SK-N-SH (cell line): ENCODE measurements at regions of chr9 and their contacts with region 1.

Region 1: GRCh38 chr9:116149844-116150243 is 3.7 kb upstream of the PAPPA start:
- DNase-seq: peak; percentile 53
- H3K4me3 ChIP-seq: no peak overlapping the region; a peak in 1 of 4 replicates
- H3K27ac ChIP-seq: peak overlapping the region in 1 of 2 experiments; percentile 99; a peak in 2 of 4 replicates
- H3K4me1 ChIP-seq: peaks cover 4 to 45% of the 10 kb centered on the region in 2 experiments; a peak in 3 of 4 replicates
- H3K27me3 ChIP-seq: no peaks in the 10 kb centered on the region
- CTCF ChIP-seq: peak; percentile 72
- EP300 ChIP-seq: no peak
- RAD21 ChIP-seq: peak; percentile 55

Region 2: GRCh38 chr9:116163293-116164055 is 13.6 kb after region 1 on chr9:
- CTCF ChIA-PET with region 1: interaction called, 11 read pairs
- POLR2A ChIA-PET with region 1: no interaction called
- DNase-seq: no peak
- H3K4me3 ChIP-seq: no peak overlapping the region
- H3K27ac ChIP-seq: peak overlapping the region in 1 of 2 experiments; percentile 16; a peak in 1 of 4 replicates
- H3K4me1 ChIP-seq: peaks cover 0 to 38% of the 10 kb centered on the region in 2 experiments; a peak in 1 of 4 replicates
- H3K27me3 ChIP-seq: no peaks in the 10 kb centered on the region
- CTCF ChIP-seq: peak; percentile 55
- EP300 ChIP-seq: no peak
- RAD21 ChIP-seq: peak; percentile 32; the same call in 1 of the 2 replicates

Region 3: GRCh38 chr9:116572095-116572748 is 422.4 kb after region 1 on chr9:
- CTCF ChIA-PET with region 1: interaction called, 51 read pairs
- POLR2A ChIA-PET with region 1: no interaction called
- DNase-seq: peak; percentile 84
- H3K4me3 ChIP-seq: no peak overlapping the region; a peak in 1 of 4 replicates
- H3K27ac ChIP-seq: peak overlapping the region in 1 of 2 experiments; percentile 16; a peak in 1 of 4 replicates
- H3K4me1 ChIP-seq: peaks cover 4 to 49% of the 10 kb centered on the region in 2 experiments; a peak in 2 of 4 replicates
- H3K27me3 ChIP-seq: no peaks in the 10 kb centered on the region
- CTCF ChIP-seq: peak; percentile 92
- EP300 ChIP-seq: 0 out of 4 replicates have a peak, but pooled peaks of 1 of the 2 experiments have one; percentile 10
- RAD21 ChIP-seq: peak; percentile 98

Region 4: DNA sequence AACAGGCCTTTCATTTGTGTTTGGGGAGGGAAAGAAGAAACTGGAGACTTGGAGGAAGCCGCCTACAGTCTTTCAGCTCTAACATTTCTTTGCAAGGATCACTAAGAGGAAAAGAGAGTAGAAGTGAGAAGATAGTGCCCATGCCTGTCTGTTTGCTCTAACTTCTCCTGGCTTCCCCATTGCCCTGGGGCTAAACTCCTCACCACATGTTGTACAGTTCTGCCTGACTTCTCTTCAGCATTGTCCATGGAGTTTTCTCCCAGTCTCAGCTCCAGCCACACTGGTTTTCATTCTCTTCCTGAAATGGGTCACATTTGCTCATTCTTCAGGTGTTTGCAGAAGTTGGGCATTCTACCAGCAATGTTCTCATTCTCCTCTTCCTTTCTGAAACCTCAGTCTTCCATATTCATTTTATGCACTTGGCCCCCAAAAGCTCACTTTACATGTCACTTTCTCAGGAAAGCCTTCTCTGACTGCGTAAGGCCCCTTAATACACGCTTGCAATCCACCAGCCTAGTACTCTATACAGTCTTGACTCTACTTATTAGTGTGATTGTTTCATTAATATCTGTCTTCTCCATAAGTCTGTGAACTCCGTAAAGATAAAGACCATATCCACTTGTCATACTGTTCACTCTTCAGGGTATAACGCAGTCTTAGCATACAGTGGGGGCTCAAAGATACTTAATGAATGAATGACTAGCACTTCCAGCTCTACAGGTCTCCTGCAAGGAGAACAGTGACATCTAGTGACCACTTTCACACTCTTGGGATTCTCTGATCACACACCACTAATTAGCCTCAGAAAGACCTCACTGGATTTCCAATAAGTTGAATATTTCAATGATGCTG is 497.0 kb after region 1 on chr9:
- CTCF ChIA-PET with region 1: interaction called, 25 read pairs
- POLR2A ChIA-PET with region 1: no interaction called
- DNase-seq: peak; percentile 25
- H3K4me3 ChIP-seq: no peak overlapping the region
- H3K27ac ChIP-seq: no peak overlapping the region
- H3K4me1 ChIP-seq: peaks cover 0 to 9% of the 10 kb centered on the region in 2 experiments; a peak in 2 of 4 replicates
- H3K27me3 ChIP-seq: no peaks in the 10 kb centered on the region
- CTCF ChIP-seq: peak; percentile 73
- EP300 ChIP-seq: no peak
- RAD21 ChIP-seq: peak; percentile 88

Region 5: GRCh38 chr9:116661037-116661954 is 511.5 kb after region 1 on chr9:
- CTCF ChIA-PET with region 1: interaction called, 11 read pairs
- POLR2A ChIA-PET with region 1: no interaction called
- DNase-seq: peak; percentile 53
- H3K4me3 ChIP-seq: no peak overlapping the region; a peak in 1 of 4 replicates
- H3K27ac ChIP-seq: no peak overlapping the region
- H3K4me1 ChIP-seq: no peaks in the 10 kb centered on the region; a peak in 1 of 4 replicates
- H3K27me3 ChIP-seq: no peaks in the 10 kb centered on the region
- CTCF ChIP-seq: peak; percentile 80
- EP300 ChIP-seq: 0 out of 4 replicates have a peak, but pooled peaks of 1 of the 2 experiments have one; percentile 20
- RAD21 ChIP-seq: peak; percentile 92